ENCODE measurements at regions of chr6 and their contacts with region 1.

Region 1: GRCh38 chr6:47161176-47161687 is 119.1 kb upstream of the ADGRF1 start:
- H3K4me3 Mint-ChIP-seq: no peak overlapping the region
- H3K27ac Mint-ChIP-seq: peak overlapping the region; percentile 58
- H3K4me1 Mint-ChIP-seq: peaks cover 46% of the 10 kb centered on the region
- H3K27me3 Mint-ChIP-seq: peaks cover 5% of the 10 kb centered on the region

Region 2: DNA sequence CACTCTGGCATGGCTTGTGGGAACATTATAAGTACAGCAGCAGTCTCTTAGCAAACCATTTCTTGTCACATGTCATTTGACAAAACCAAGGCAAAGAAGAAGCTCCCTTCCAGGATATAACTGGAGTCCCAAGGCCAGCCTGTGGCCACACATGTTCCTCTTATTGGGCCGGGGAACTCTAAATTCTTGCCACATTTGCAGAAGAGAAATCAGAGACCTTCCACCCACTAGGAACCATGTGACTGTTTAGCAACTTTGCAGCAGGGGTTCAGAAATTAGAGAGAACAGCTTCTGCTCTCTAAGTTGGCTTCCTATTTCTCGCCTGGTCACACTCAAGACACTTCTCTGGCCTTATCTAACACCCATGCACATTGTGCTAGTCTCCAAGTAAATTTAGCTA is 388.5 kb before region 1 on chr6:
- intact Hi-C with region 1: no loop called
- H3K4me3 Mint-ChIP-seq: no peak overlapping the region
- H3K27ac Mint-ChIP-seq: peak overlapping the region; percentile 76
- H3K4me1 Mint-ChIP-seq: peaks cover 57% of the 10 kb centered on the region
- H3K27me3 Mint-ChIP-seq: no peaks in the 10 kb centered on the region

Region 3: DNA sequence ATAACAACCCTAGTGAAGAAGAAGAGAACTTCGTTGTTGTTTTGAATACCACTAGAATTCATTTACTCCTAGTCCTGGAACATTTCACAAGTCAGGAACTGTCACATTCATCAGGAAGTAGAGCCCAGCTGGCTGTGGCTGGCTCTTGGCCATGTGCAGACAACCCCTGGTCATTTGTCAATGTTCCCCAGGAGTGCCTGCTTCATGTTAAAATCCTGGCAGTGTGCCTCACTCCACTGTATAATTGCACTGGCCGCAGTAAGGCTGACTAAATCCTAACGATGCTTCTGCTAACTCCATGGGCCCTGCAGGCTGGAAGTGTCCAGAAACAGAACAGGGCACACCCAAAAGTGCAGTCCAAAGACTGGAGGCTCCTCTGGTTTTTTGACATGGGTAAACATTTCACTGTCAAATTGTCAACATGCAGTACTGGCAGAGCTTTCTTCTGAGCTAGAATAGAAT is 77.6 kb before region 1 on chr6:
- intact Hi-C with region 1: no loop called
- H3K4me3 Mint-ChIP-seq: no peak overlapping the region
- H3K27ac Mint-ChIP-seq: no peak overlapping the region
- H3K4me1 Mint-ChIP-seq: no peaks in the 10 kb centered on the region
- H3K27me3 Mint-ChIP-seq: peaks cover 13% of the 10 kb centered on the region

Region 4: GRCh38 chr6:47242483-47243386 is 81.5 kb after region 1 on chr6:
- intact Hi-C with region 1: loop called (anchors 5 kb)
- H3K4me3 Mint-ChIP-seq: no peak overlapping the region
- H3K27ac Mint-ChIP-seq: peak overlapping the region; percentile 63
- H3K4me1 Mint-ChIP-seq: peaks cover 55% of the 10 kb centered on the region
- H3K27me3 Mint-ChIP-seq: peaks cover 4% of the 10 kb centered on the region